ENCODE measurements at regions of chr7 and their contacts with region 1.

Region 1: GRCh38 chr7:52143219-52143618 is 826.6 kb upstream of the COBL start:
- DNase-seq: no peak
- H3K4me3 ChIP-seq: no peak overlapping the region
- CTCF ChIP-seq: no peak
- POLR2A ChIP-seq: no peak

Region 2: GRCh38 chr7:52197221-52197620 is 54.0 kb after region 1 on chr7:
- intact Hi-C with region 1: loop called (anchors 2 kb)
- DNase-seq: no peak
- H3K4me3 ChIP-seq: no peak overlapping the region
- CTCF ChIP-seq: no peak
- POLR2A ChIP-seq: no peak

Region 3: DNA sequence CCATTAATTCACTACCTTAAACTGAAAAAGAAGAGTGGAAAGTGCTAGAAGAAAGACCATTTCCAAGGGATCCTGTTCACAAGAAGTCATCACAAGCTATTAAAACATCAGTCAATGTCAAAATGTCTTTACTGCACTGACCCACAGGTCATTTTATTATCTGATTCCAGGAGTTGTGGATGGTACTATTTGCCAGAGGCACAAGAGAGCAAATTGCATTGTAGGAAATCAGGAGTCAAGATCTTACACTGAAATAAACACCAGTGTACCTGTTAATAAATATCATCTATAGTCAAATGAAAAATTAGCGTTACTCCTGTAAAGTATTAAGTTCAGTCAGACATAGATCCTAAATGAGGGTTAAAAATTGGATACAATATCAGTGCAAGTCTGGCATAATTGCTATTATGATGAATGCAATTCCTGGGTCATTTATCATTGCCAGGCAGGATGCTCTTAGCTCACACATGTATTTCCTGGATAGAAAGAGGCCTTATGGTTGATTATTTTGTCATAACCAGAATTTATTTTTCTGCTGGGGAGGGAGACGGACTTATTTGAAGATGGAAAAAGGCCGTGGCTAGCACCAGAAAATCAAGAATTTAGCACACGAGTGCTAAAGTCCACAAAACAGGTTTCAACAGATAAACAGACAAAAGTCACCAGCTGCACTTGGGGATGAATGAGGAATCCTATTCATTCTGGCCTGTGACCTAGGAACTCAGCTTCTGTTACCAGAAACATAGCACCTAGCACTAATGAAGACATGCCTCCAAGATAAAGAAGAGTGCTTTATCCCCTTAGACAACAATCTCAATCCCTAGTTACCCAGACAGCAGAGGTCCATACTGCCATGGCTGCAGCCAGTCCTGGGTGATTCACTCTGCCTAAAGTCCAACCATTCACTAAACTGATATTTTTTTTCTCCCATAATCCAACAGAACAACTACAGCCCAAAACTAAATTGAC is 209.1 kb after region 1 on chr7:
- intact Hi-C with region 1: no loop called
- DNase-seq: no peak
- H3K4me3 ChIP-seq: no peak overlapping the region
- CTCF ChIP-seq: no peak
- POLR2A ChIP-seq: no peak

Measured in lower leg skin (tissue), 4 donors.